Motor neuron (in vitro differentiated cells): ENCODE measurements at regions of chr10 and their contacts with region 1.

Region 1: GRCh38 chr10:24974976-24975375 is 22.6 kb upstream of the PRTFDC1 start:
- ATAC-seq: peak in 3 of 8 experiments; percentile 12 to 73 (median 72)
- H3K4me3 ChIP-seq: no peak overlapping the region
- H3K27ac ChIP-seq: no peak overlapping the region
- H3K4me1 ChIP-seq: no peaks in the 10 kb centered on the region

Region 2: DNA sequence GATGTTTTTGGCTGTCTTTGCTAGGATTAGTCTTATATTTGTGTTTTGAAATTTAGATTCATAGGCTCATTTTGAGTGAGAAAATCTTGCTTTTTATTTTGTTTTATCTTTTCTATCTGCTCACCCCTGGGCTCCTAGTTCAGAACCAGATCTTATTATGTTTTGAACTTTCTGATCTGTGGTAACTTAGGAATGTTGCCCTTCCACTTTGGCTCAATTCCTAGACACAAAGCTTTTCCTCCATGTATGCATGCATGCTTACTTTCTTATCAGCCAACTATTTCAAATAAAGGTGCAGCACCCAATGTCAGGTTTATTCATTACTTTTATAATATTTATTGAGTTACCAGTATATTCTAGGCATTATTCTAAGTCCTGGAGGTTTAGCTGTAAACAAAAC is 1140.9 kb before region 1 on chr10:
- in situ Hi-C with region 1: no loop called
- ATAC-seq: no peak
- H3K4me3 ChIP-seq: no peak overlapping the region
- H3K27ac ChIP-seq: no peak overlapping the region
- H3K4me1 ChIP-seq: no peaks in the 10 kb centered on the region

Region 3: GRCh38 chr10:24642622-24643417 is 332.2 kb before region 1 on chr10:
- in situ Hi-C with region 1: loop called in 1 of 9 experiments (anchors 25 kb)
- ATAC-seq: peak in 6 of 8 experiments; percentile 27 to 98 (median 70)
- H3K4me3 ChIP-seq: no peak overlapping the region
- H3K27ac ChIP-seq: no peak overlapping the region
- H3K4me1 ChIP-seq: no peaks in the 10 kb centered on the region

Region 4: GRCh38 chr10:24724381-24725228 is 250.4 kb before region 1 on chr10:
- in situ Hi-C with region 1: loop called in 1 of 9 experiments (anchors 25 kb)
- ATAC-seq: peak; percentile 66 to 89 (median 86)
- H3K4me3 ChIP-seq: peak overlapping the region; percentile 86 to 96 (median 93)
- H3K27ac ChIP-seq: peak overlapping the region; percentile 97
- H3K4me1 ChIP-seq: peaks cover 0 to 5% of the 10 kb centered on the region in 2 donors